MCF 10A (cell line): ENCODE measurements at regions of chr11 and their contacts with region 1.

Region 1: DNA sequence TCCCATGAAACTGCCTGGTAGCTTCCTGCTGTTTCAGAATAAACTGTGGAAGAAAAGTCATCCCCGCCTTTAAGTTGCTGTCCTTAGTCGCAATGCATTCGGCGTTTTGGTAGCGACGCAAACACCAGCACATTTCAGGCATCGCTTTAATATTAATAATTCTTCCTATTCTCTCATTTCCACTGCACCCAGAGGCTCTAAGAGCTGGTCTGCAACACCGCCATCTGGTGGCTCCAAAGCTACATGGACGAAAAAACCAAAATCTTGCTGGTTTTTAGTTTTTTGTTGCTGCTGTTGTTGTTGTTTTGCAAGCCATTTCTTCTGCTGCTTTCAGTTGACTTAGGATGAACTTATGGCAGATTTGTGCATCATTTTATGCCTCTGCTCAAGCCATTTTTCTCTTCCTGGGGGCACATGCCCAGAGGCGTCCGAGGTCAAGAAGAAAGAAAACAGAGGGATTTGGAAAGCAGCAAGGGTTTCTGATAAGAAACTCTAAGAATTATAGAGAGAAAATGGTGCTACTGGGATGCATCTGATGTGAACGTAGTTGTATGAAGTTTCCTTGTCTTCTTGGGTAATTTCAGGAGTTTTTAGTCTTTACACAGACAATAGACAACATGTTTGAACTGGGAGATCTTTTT is 345.4 kb upstream of the KIRREL3 start:
- DNase-seq: peak; percentile 58
- H3K4me3 Mint-ChIP-seq: no peak overlapping the region
- H3K27ac Mint-ChIP-seq: no peak overlapping the region
- H3K4me1 Mint-ChIP-seq: no peaks in the 10 kb centered on the region
- H3K27me3 Mint-ChIP-seq: no peaks in the 10 kb centered on the region
- CTCF ChIP-seq: peak; percentile 72

Region 2: DNA sequence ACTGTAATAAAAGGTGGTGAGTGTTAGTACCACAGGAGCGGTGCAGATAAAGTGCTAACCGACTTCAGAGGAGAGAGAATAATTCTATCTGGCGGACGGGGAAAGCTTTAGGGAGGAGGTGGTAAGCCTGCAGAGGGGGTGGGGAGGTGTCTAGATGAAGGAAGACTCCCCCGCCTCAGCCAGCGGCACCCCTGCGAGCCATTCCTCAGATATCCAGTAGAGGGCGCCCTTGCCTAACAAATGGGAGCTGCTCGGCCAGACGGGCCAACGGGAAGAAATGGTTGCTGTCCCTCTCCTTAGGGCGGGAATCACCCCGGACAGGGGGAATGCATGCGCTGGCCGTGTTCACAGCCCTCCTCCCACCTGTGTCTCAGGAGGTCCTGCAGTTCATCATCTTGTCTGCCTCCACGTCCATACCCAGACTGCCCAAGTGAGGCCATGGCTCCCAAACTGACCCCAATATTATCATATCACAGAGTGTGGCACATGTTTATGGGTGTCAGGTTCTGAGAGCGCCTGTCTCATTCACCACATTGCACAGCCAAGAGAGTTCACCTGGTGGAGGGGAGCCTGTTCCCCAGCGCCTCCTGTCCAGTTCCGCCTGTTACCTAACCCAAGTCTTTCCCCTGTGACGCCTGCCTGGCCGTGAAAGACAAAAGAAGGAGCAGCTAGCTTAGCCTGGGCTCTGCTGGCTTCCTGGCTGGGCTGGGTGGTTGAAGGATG is 905.0 kb before region 1 on chr11:
- CTCF ChIA-PET with region 1: interaction called, 6 read pairs
- POLR2A ChIA-PET with region 1: no interaction called
- intact Hi-C with region 1: loop called (anchors 5 kb)
- DNase-seq: peak; percentile 80
- H3K4me3 Mint-ChIP-seq: no peak overlapping the region
- H3K27ac Mint-ChIP-seq: no peak overlapping the region
- H3K4me1 Mint-ChIP-seq: peaks cover 5% of the 10 kb centered on the region
- H3K27me3 Mint-ChIP-seq: no peaks in the 10 kb centered on the region
- CTCF ChIP-seq: peak; percentile 95

Region 3: DNA sequence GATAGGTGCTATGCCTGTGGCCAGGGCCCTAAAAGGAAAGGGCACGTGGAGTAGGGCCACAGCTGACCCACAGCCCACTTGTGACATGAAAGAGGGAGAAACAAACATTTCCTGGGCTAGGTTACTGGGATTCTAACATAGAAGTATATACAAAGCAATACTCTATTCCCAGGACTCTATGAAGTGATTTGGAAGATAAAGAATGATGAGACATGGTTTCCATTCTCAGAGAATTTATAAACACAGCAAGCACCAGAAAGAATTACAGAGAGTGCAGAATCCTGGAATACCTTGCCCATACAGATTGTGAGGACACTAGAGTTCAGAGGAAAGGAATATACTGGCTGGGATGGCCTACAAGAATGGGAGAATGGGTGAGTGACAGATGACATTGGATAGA is 431.8 kb before region 1 on chr11:
- CTCF ChIA-PET with region 1: no interaction called
- POLR2A ChIA-PET with region 1: no interaction called
- intact Hi-C with region 1: no loop called
- DNase-seq: no peak
- H3K4me3 Mint-ChIP-seq: no peak overlapping the region
- H3K27ac Mint-ChIP-seq: no peak overlapping the region
- H3K4me1 Mint-ChIP-seq: no peaks in the 10 kb centered on the region
- H3K27me3 Mint-ChIP-seq: no peaks in the 10 kb centered on the region
- CTCF ChIP-seq: no peak

Region 4: GRCh38 chr11:127003260-127003981 is 342.5 kb before region 1 on chr11:
- CTCF ChIA-PET with region 1: interaction called, 10 read pairs
- POLR2A ChIA-PET with region 1: no interaction called
- intact Hi-C with region 1: no loop called
- DNase-seq: no peak
- H3K4me3 Mint-ChIP-seq: no peak overlapping the region
- H3K27ac Mint-ChIP-seq: no peak overlapping the region
- H3K4me1 Mint-ChIP-seq: no peaks in the 10 kb centered on the region
- H3K27me3 Mint-ChIP-seq: no peaks in the 10 kb centered on the region
- CTCF ChIP-seq: no peak